Adrenal gland (tissue), 19 donors: ENCODE measurements at regions of chr7 and their contacts with region 1.

Region 1: DNA sequence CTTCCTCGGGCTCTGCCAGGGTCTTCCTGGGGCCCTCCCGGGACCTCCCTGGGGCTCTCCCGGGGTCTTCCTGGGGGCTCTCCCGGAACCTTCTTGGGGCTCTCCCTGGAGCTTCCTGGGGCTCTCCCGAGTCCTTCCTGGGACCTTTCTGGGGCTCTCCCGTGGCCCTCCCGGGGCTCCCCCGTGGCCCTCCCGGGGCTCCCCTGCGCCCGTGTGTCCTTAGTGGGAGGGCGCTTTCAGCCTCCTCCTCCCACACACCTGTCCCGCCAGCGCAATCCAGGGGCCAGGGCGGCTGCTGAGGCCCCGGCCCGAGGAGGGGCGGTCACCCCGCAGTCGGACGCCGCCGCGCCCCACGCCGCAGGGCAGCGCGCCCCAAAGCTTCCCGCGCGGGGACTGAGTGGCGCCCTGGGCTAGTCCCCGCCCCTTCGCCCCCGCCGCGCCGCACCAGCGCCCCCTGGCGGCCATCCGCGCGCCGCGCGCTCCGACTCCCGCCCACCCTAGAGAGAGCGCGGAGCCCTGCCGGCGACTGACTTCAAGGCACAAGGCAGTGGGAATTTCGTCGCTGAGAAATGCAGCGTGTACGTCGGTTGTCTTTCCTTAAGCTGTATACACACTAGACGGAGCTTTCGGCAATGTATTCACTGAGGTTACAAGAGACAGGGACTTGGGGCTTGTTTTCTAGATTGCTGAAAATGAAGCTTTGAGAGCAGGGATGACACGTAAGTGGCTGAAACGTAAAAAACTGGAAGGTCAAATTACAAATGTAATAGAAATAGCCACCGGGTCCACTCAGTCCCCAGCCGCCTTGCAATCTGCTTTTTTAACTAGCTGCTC is 47.1 kb downstream of the INSIG1 start:
- DNase-seq: peak; percentile 43 to 83 (median 71)
- H3K4me3 ChIP-seq: peak overlapping the region in 1 of 4 donors; percentile 47
- H3K27ac ChIP-seq: no peak overlapping the region
- H3K4me1 ChIP-seq: peaks cover 3% of the 10 kb centered on the region in 2 donors
- H3K27me3 ChIP-seq: no peaks in the 10 kb centered on the region
- CTCF ChIP-seq: peak; percentile 55 to 96 (median 80)
- POLR2A ChIP-seq: no peak

Region 2: DNA sequence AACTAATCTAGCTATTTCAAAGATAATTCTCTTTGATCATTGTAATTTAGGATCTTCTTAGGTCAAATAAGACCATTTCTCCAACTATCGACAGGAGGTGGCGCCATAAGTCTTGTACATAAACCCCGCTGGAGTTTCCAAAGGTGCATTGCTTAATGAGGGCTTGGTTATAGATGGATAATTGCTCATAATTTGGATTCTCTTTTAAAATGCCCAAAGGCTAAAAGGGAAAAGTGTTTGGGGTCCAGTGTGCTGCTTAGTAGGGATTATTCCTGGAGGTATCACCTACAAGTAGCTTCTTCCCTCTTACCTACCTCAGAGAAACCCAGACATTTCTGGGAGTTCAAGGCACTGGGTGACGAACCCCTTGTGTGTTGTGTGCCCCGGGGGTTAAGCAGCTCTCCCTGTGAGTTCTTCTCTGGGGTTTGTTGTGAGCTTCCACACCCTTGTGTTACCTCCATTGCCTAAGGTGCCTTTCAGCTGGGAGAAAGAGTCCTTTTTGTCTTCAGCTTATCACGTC is 417.1 kb before region 1 on chr7:
- intact Hi-C with region 1: loop called (anchors 2 to 5 kb)
- DNase-seq: peak; percentile 81 to 95 (median 89)
- H3K4me3 ChIP-seq: peak overlapping the region in 3 of 4 donors; percentile 1 to 82 (median 35)
- H3K27ac ChIP-seq: peak overlapping the region; percentile 44 to 93 (median 90)
- H3K4me1 ChIP-seq: peaks cover 0 to 20% of the 10 kb centered on the region in 2 donors
- H3K27me3 ChIP-seq: no peaks in the 10 kb centered on the region
- CTCF ChIP-seq: peak; percentile 38 to 77 (median 72)
- POLR2A ChIP-seq: no peak

Region 3: GRCh38 chr7:155182406-155182970 is 162.3 kb before region 1 on chr7:
- intact Hi-C with region 1: loop called in 1 of 2 experiments (anchors 5 kb)
- DNase-seq: peak in 1 of 7 donors; percentile 5
- H3K4me3 ChIP-seq: no peak overlapping the region
- H3K27ac ChIP-seq: no peak overlapping the region
- H3K4me1 ChIP-seq: no peaks in the 10 kb centered on the region
- H3K27me3 ChIP-seq: no peaks in the 10 kb centered on the region
- CTCF ChIP-seq: no peak
- POLR2A ChIP-seq: no peak

Region 4: DNA sequence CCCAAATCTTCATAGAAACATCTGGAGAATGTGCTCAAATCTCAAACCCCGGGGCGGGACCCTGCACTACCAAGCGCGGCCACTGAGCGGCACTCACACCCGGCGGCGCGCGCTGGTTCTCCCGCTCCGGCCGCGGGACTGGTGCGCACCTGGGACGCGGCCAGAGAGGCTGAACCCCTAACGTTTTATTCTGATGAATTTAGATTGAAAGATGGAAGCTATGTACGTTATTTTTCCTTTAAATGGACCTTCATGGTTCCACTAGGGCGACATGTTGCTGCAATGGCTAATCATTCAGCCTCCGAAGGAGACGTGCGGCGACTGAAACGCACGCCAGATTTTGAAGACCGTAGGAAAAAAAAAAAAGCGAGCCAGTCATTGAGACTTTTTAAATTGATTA is 154.1 kb before region 1 on chr7:
- intact Hi-C with region 1: loop called (anchors 2 kb)
- DNase-seq: peak in 5 of 7 donors; percentile 33 to 62 (median 53)
- H3K4me3 ChIP-seq: no peak overlapping the region
- H3K27ac ChIP-seq: no peak overlapping the region
- H3K4me1 ChIP-seq: no peaks in the 10 kb centered on the region
- H3K27me3 ChIP-seq: peaks cover 4% of the 10 kb centered on the region
- CTCF ChIP-seq: peak; percentile 77 to 94 (median 84)
- POLR2A ChIP-seq: no peak

Region 5: DNA sequence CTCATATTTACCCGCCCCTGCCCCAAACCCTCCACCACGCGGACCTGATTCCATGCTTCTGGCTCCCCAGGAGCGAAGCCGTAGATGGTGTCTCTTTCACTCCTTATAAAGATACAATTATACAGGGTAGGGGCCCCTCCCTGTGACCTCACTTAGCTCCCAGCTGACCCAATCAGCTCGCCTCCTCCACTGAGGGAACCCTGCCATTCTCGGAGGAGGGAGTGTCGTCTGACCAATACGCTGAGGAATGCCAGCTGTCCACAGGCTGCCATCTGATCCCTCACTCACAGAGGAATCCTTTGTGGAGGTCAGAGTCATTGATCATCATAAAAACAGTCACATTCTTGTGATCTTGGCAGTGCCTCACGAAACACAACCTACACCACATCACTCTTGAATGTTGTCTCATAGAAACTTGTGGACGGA is 114.6 kb before region 1 on chr7:
- intact Hi-C with region 1: no loop called
- DNase-seq: peak in 4 of 7 donors; percentile 30 to 64 (median 52)
- H3K4me3 ChIP-seq: no peak overlapping the region
- H3K27ac ChIP-seq: no peak overlapping the region
- H3K4me1 ChIP-seq: no peaks in the 10 kb centered on the region
- H3K27me3 ChIP-seq: peaks cover 7% of the 10 kb centered on the region
- CTCF ChIP-seq: no peak
- POLR2A ChIP-seq: no peak